AG04450 (cell line): ENCODE measurements at regions of chr5 and their contacts with region 1.

Region 1: GRCh38 chr5:103475629-103476240 is 86.9 kb downstream of the NUDT12 start:
- DNase-seq: no peak
- H3K4me3 ChIP-seq: no peak overlapping the region
- H3K27ac ChIP-seq: no peak overlapping the region
- H3K27me3 ChIP-seq: no peaks in the 10 kb centered on the region
- CTCF ChIP-seq: peak; percentile 63

Region 2: GRCh38 chr5:103139264-103139865 is 336.4 kb before region 1 on chr5:
- CTCF ChIA-PET with region 1: interaction called, 29 read pairs
- POLR2A ChIA-PET with region 1: no interaction called
- DNase-seq: peak; percentile 38
- H3K4me3 ChIP-seq: no peak overlapping the region
- H3K27ac ChIP-seq: no peak overlapping the region
- H3K27me3 ChIP-seq: no peaks in the 10 kb centered on the region
- CTCF ChIP-seq: peak; percentile 94

Region 3: GRCh38 chr5:103224118-103224893 is 251.4 kb before region 1 on chr5:
- CTCF ChIA-PET with region 1: interaction called, 44 read pairs
- POLR2A ChIA-PET with region 1: no interaction called
- DNase-seq: no peak
- H3K4me3 ChIP-seq: no peak overlapping the region
- H3K27ac ChIP-seq: no peak overlapping the region
- H3K27me3 ChIP-seq: no peaks in the 10 kb centered on the region
- CTCF ChIP-seq: peak; percentile 69

Region 4: GRCh38 chr5:103232393-103232999 is 243.2 kb before region 1 on chr5:
- CTCF ChIA-PET with region 1: interaction called, 125 read pairs
- POLR2A ChIA-PET with region 1: no interaction called
- DNase-seq: no peak
- H3K4me3 ChIP-seq: no peak overlapping the region
- H3K27ac ChIP-seq: no peak overlapping the region
- H3K27me3 ChIP-seq: no peaks in the 10 kb centered on the region
- CTCF ChIP-seq: peak; percentile 93

Region 5: GRCh38 chr5:103243665-103244064 is 232.1 kb before region 1 on chr5:
- CTCF ChIA-PET with region 1: interaction called, 14 read pairs
- POLR2A ChIA-PET with region 1: no interaction called
- DNase-seq: no peak
- H3K4me3 ChIP-seq: no peak overlapping the region
- H3K27ac ChIP-seq: no peak overlapping the region
- H3K27me3 ChIP-seq: no peaks in the 10 kb centered on the region
- CTCF ChIP-seq: no peak

Region 6: DNA sequence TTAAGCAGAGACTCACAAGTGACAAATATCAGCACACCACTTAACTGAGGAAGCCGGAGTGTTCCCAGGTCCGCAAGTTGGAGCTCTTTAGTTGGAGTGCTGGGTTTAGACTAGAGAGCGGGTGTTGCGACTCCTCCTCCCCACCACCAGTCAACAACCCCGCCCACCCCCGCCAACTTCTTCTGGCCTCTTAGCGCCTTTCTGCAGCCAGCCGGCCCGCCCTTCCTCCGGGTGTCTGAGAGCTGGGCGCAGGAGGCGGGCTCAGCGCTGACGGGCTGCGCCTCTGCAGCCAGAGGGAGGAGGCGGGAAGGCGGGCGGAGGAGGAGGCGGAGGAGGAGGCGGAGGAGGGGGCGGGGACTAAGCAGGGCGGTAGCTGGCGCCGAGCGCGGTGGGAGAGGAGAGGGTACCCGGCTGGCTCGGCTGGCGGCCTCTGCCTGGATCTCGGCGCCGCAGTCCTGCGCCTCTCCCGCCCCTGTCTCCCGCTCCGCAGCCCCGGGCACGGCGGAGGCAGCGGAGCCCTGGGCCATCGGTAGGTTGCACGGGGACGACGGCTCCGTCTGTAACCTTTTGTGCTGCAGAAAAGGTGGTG is 217.3 kb before region 1 on chr5 and contains the start of gene MACIR:
- CTCF ChIA-PET with region 1: interaction called, 35 read pairs
- POLR2A ChIA-PET with region 1: no interaction called
- DNase-seq: peak; percentile 94
- H3K4me3 ChIP-seq: peak within 1 kb of the TSS; percentile 89
- H3K27ac ChIP-seq: no peak within 1 kb of the TSS
- H3K27me3 ChIP-seq: no peaks in the 10 kb centered on the region
- CTCF ChIP-seq: no peak
- polyA plus RNA-seq, gene MACIR: 5.3 and 6.3 TPM in 2 replicates

Region 7: GRCh38 chr5:103487218-103487617 is 11.5 kb after region 1 on chr5:
- CTCF ChIA-PET with region 1: interaction called, 11 read pairs
- POLR2A ChIA-PET with region 1: no interaction called
- DNase-seq: no peak
- H3K4me3 ChIP-seq: no peak overlapping the region
- H3K27ac ChIP-seq: no peak overlapping the region
- H3K27me3 ChIP-seq: no peaks in the 10 kb centered on the region
- CTCF ChIP-seq: 0 out of 2 replicates have a peak, but pooled peaks have one; percentile 7